Naive thymus-derived CD8-positive, alpha-beta T cell (primary cell): ENCODE measurements at regions of chr4 and their contacts with region 1.

Region 1: DNA sequence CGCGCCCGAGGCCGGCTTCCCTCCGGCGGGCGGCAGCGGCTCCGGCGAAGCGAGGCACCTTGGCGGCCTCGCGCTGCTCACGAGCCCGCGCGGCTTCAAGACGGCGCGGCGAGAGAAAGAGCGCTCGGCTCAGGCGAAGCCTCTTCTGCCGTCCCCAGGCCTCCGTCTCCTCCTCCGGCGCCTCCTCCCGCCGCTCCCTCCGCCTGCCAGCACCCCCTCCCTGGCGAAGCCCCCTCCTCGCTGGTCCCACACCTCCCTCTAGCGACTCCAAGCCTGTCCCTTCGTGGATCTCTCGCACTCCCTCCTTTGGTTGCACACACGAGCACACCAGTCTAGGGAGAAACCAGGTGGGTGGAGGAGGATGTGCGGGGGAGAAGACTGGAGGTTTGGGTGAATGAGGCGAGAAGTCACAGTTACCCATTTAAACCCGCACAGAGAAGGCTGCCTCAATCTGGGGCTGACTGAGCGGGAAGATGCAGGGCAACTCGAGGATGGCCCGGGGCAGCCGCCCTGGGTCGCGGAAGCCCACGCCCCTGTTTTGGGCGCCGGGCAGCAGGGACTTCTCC is at the start of gene CAMK2D:
- DNase-seq: peak in 9 of 10 donors; percentile 70 to 89 (median 81)
- ATAC-seq: peak; percentile 53 to 60
- H3K4me3 Mint-ChIP-seq: peak within 1 kb of the TSS; percentile 88 to 99 (median 98)
- H3K27ac Mint-ChIP-seq: peak within 1 kb of the TSS; percentile 95 to 100 (median 98)
- H3K4me1 Mint-ChIP-seq: peaks cover 10 to 44% (median 37%) of the 10 kb centered on the region in 4 donors
- H3K27me3 Mint-ChIP-seq: peaks cover 0 to 4% (median 0%) of the 10 kb centered on the region in 5 donors
- polyA plus RNA-seq, gene CAMK2D: 10.4 to 12.0 (median 11.4) TPM

Region 2: DNA sequence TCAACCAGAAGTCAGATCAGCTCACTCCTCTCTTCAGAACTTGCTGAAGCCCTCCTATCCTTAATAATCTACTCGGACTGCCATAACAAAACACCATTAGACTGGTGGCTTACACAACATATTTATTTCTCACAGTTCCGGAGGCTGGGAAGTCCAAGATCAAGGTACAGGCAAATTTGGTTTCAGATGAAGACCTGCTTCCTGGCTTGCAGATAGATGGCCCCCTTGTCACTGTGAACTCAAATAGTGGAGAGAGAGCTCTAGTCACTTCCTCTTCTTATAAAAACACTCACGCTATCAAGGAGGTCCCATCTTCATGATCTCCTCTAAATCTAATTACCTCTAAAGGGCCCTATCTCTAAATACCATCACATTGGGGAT is 125.3 kb before region 1 on chr4:
- POLR2A ChIA-PET with region 1: interaction called, 12 read pairs
- DNase-seq: peak in 7 of 10 donors; percentile 11 to 63 (median 35)
- ATAC-seq: peak; percentile 82 to 83
- H3K4me3 Mint-ChIP-seq: peak overlapping the region; percentile 38 to 74 (median 62)
- H3K27ac Mint-ChIP-seq: peak overlapping the region; percentile 28 to 91 (median 84)
- H3K4me1 Mint-ChIP-seq: peaks cover 33 to 71% (median 53%) of the 10 kb centered on the region in 4 donors
- H3K27me3 Mint-ChIP-seq: no peaks in the 10 kb centered on the region

Region 3: GRCh38 chr4:113899271-113900070 is 137.8 kb after region 1 on chr4:
- POLR2A ChIA-PET with region 1: interaction called, 11 read pairs
- DNase-seq: peak in 8 of 10 donors; percentile 7 to 75 (median 58)
- ATAC-seq: peak; percentile 70 to 78
- H3K4me3 Mint-ChIP-seq: peak overlapping the region; percentile 38 to 74 (median 63)
- H3K27ac Mint-ChIP-seq: peak overlapping the region; percentile 90 to 99 (median 94)
- H3K4me1 Mint-ChIP-seq: peaks cover 33 to 69% (median 65%) of the 10 kb centered on the region in 4 donors
- H3K27me3 Mint-ChIP-seq: no peaks in the 10 kb centered on the region

Region 4: DNA sequence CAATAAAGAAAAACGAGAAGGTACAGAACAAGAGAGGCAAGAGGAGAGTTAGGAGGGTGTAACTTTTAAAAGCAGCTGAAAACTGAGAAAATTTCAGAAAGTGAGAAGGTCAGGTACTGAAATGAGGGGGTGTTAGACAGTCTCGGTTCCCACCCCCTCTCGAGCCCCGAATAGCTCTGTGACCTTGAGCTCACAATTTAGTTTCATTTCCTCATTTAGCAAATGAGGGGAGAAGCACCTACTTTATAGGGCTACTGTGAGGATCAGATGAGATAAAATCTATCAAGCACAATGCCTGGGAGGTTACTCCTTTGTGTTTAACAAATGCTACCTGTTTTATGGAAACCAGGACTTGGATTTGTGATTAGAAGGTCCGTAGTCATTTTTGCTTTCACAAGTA is 841.8 kb after region 1 on chr4:
- POLR2A ChIA-PET with region 1: no interaction called
- DNase-seq: no peak
- ATAC-seq: peak in 1 of 2 donors; percentile 44
- H3K4me3 Mint-ChIP-seq: no peak overlapping the region
- H3K27ac Mint-ChIP-seq: no peak overlapping the region
- H3K4me1 Mint-ChIP-seq: peaks cover 10 to 16% (median 13%) of the 10 kb centered on the region in 4 donors
- H3K27me3 Mint-ChIP-seq: peaks cover 7 to 22% (median 13%) of the 10 kb centered on the region in 5 donors